Endothelial cell of umbilical vein (primary cell): ENCODE measurements at regions of chr17 and their contacts with region 1.

Region 1: DNA sequence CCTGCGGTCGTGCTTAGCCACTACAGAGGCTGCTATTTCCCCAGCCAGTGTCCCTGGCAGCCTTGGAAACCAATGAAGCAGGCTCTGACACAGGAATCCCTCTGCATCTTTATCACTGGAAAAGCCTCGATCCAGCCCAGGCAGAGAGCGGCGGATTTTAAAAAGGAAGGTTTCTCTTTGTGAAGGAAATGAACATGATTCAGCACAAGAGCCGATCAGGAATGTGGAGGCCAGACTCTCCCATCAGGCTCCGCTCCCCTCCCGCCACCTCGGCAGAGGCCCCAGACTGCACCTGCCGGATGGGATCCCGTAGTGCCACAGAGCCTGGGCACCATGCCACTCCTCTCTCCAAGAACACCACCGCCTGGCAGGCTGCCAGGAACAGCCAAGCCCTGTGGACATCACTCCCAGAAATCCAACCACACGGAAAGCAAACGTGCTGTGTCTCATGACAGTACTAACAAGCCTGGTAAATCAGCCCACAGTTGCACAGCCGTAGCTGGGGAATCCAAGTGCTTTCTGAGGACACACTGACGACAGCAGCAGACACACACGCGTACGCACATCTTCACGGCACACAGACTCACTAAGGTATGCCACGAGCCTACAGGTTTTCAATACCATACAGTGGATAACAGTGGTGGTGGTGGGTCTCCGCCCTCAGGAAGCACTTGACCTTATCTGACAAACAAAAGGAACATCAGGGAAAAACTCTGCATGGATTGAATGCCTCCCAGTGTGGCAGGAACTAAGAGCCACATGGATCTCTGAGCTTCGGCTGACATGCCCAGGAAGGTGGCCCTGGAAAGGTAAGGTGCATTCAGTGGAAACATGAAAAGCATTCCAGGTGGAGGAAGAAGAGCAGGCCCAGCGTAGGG is 5.4 kb downstream of the LRRC75A start:
- DNase-seq: peak; percentile 83
- H3K4me3 ChIP-seq: peak overlapping the region in 2 of 3 experiments; percentile 5 to 9
- H3K27ac ChIP-seq: peak overlapping the region; percentile 80
- H3K4me1 ChIP-seq: peaks cover 41% of the 10 kb centered on the region
- H3K27me3 ChIP-seq: peaks cover 0 to 6% of the 10 kb centered on the region in 2 experiments
- CTCF ChIP-seq: no peak
- POLR2A ChIP-seq: peak; percentile 52

Region 2: DNA sequence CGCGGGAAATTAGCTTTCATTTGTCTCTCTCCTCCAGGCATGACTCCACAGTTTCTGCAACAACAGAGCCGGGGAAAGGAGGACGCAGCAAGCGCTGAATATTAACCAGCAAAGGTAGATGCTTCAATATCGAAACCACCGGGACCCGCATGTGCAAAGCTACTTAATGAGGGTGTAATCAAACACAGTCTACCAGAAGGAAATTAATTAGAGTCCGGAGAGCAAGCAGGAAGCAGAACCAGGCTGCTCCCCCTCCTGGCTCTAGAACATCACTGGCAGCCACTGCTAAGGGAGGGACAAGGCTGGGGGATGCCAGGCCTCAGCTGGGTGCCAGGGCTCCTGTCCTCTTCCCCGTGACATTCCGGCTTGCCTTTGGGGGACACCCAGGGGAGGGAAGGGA is 16.3 kb before region 1 on chr17:
- CTCF ChIA-PET with region 1: interaction called, 9 read pairs
- POLR2A ChIA-PET with region 1: no interaction called
- dilution Hi-C with region 1: no loop called
- intact Hi-C with region 1: loop called (anchors 2 kb)
- DNase-seq: peak; percentile 33
- H3K4me3 ChIP-seq: no peak overlapping the region
- H3K27ac ChIP-seq: no peak overlapping the region
- H3K4me1 ChIP-seq: peaks cover 20% of the 10 kb centered on the region
- H3K27me3 ChIP-seq: no peaks in the 10 kb centered on the region
- CTCF ChIP-seq: peak in 1 of 2 donors; percentile 36
- POLR2A ChIP-seq: no peak